ENCODE measurements at regions of chr11 and their contacts with region 1.

Region 1: GRCh38 chr11:87421422-87421821 is 383.7 kb downstream of the TMEM135 start:
- DNase-seq: peak; percentile 79
- H3K4me3 Mint-ChIP-seq: no peak overlapping the region
- H3K27ac Mint-ChIP-seq: no peak overlapping the region
- H3K4me1 Mint-ChIP-seq: peaks cover 20% of the 10 kb centered on the region
- H3K27me3 Mint-ChIP-seq: no peaks in the 10 kb centered on the region
- CTCF ChIP-seq: peak; percentile 71

Region 2: DNA sequence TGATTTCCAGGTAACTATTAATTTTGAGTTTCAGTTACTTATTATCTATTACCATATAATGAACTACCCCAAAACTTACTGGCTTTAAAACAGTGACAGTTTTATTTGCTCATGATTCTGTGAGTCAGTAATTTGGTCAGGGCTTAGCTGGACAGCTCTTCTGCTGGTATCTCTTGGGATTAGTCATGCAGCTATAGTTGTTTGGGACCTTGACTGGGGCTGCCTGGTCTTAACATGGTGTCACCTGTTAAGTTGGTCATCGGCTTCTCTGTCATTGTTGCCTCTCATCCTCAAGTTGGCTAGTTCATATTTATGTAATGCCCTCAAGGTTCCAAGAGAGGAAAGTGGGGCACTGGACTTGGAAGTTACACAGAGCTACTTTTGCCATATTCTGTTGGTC is 206.2 kb before region 1 on chr11:
- CTCF ChIA-PET with region 1: no interaction called
- POLR2A ChIA-PET with region 1: no interaction called
- intact Hi-C with region 1: no loop called
- DNase-seq: peak; percentile 18
- H3K4me3 Mint-ChIP-seq: no peak overlapping the region
- H3K27ac Mint-ChIP-seq: no peak overlapping the region
- H3K4me1 Mint-ChIP-seq: no peaks in the 10 kb centered on the region
- H3K27me3 Mint-ChIP-seq: no peaks in the 10 kb centered on the region
- CTCF ChIP-seq: no peak

Region 3: GRCh38 chr11:87368858-87369480 is 52.5 kb before region 1 on chr11:
- CTCF ChIA-PET with region 1: interaction called, 32 read pairs
- POLR2A ChIA-PET with region 1: no interaction called
- intact Hi-C with region 1: no loop called
- DNase-seq: no peak
- H3K4me3 Mint-ChIP-seq: no peak overlapping the region
- H3K27ac Mint-ChIP-seq: no peak overlapping the region
- H3K4me1 Mint-ChIP-seq: no peaks in the 10 kb centered on the region
- H3K27me3 Mint-ChIP-seq: no peaks in the 10 kb centered on the region
- CTCF ChIP-seq: no peak

Region 4: GRCh38 chr11:87405843-87406242 is 15.6 kb before region 1 on chr11:
- CTCF ChIA-PET with region 1: interaction called, 35 read pairs
- POLR2A ChIA-PET with region 1: interaction called, 3 read pairs
- intact Hi-C with region 1: no loop called
- DNase-seq: no peak
- H3K4me3 Mint-ChIP-seq: no peak overlapping the region
- H3K27ac Mint-ChIP-seq: no peak overlapping the region
- H3K4me1 Mint-ChIP-seq: peaks cover 6% of the 10 kb centered on the region
- H3K27me3 Mint-ChIP-seq: no peaks in the 10 kb centered on the region
- CTCF ChIP-seq: no peak

Region 5: DNA sequence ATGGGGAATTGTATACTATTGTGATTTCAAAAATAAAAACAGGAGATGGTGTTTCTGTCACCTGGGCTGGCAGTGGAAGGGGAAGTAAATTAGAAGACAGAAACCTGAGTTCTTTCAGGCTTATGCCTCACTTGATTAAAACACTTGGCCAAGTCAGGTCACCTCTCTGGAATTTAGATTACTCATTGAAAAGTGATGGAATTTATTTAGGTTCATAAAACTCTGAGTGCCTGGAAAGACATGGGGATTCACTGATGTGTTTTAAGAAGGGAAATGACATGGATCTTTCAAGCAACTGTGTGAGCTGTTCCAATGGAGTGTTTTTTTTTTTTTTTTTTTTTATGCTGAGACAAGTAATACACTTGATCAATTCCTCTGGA is 16.4 kb after region 1 on chr11:
- CTCF ChIA-PET with region 1: interaction called, 29 read pairs
- POLR2A ChIA-PET with region 1: no interaction called
- intact Hi-C with region 1: no loop called
- DNase-seq: peak; percentile 20
- H3K4me3 Mint-ChIP-seq: no peak overlapping the region
- H3K27ac Mint-ChIP-seq: no peak overlapping the region
- H3K4me1 Mint-ChIP-seq: peaks cover 15% of the 10 kb centered on the region
- H3K27me3 Mint-ChIP-seq: no peaks in the 10 kb centered on the region
- CTCF ChIP-seq: no peak

Measured in MCF 10A (cell line).